ENCODE measurements at regions of chr2 and their contacts with region 1.

Region 1: GRCh38 chr2:101012706-101013181 is 10.7 kb downstream of the RPL31 start:
- DNase-seq: peak in 6 of 9 experiments; percentile 11 to 65 (median 44)
- ATAC-seq: peak; percentile 38
- H3K4me3 ChIP-seq: no peak overlapping the region
- H3K4me3 Mint-ChIP-seq: no peak overlapping the region
- H3K27ac ChIP-seq: no peak overlapping the region
- H3K27ac Mint-ChIP-seq: no peak overlapping the region
- H3K4me1 ChIP-seq: no peaks in the 10 kb centered on the region
- H3K4me1 Mint-ChIP-seq: peaks cover 15% of the 10 kb centered on the region
- H3K27me3 ChIP-seq: no peaks in the 10 kb centered on the region
- H3K27me3 Mint-ChIP-seq: no peaks in the 10 kb centered on the region
- CTCF ChIP-seq: peak; percentile 96

Region 2: GRCh38 chr2:100935372-100935752 is 77.4 kb before region 1 on chr2:
- CTCF ChIA-PET with region 1: no interaction called
- POLR2A ChIA-PET with region 1: no interaction called
- intact Hi-C with region 1: no loop called
- DNase-seq: no peak
- ATAC-seq: no peak
- H3K4me3 ChIP-seq: no peak overlapping the region
- H3K4me3 Mint-ChIP-seq: no peak overlapping the region
- H3K27ac ChIP-seq: no peak overlapping the region
- H3K27ac Mint-ChIP-seq: no peak overlapping the region
- H3K4me1 ChIP-seq: no peaks in the 10 kb centered on the region
- H3K4me1 Mint-ChIP-seq: peaks cover under 1% of the 10 kb centered on the region
- H3K27me3 ChIP-seq: no peaks in the 10 kb centered on the region
- H3K27me3 Mint-ChIP-seq: no peaks in the 10 kb centered on the region
- CTCF ChIP-seq: no peak

Region 3: GRCh38 chr2:101001691-101002561 is 10.8 kb before region 1 on chr2 and contains the start of gene RPL31:
- CTCF ChIA-PET with region 1: interaction called, 13 read pairs
- POLR2A ChIA-PET with region 1: no interaction called
- intact Hi-C with region 1: no loop called
- DNase-seq: peak; percentile 90 to 98 (median 95)
- ATAC-seq: peak; percentile 97
- H3K4me3 ChIP-seq: peak within 1 kb of the TSS; percentile 92 to 95
- H3K4me3 Mint-ChIP-seq: peak within 1 kb of the TSS; percentile 95
- H3K27ac ChIP-seq: peak within 1 kb of the TSS; percentile 81 to 90
- H3K27ac Mint-ChIP-seq: peak within 1 kb of the TSS; percentile 98
- H3K4me1 ChIP-seq: peaks cover 27% of the 10 kb centered on the region
- H3K4me1 Mint-ChIP-seq: peaks cover 51% of the 10 kb centered on the region
- H3K27me3 ChIP-seq: no peaks in the 10 kb centered on the region
- H3K27me3 Mint-ChIP-seq: no peaks in the 10 kb centered on the region
- CTCF ChIP-seq: no peak
- total RNA-seq, gene RPL31: 2,776 to 2,895 TPM

Region 4: DNA sequence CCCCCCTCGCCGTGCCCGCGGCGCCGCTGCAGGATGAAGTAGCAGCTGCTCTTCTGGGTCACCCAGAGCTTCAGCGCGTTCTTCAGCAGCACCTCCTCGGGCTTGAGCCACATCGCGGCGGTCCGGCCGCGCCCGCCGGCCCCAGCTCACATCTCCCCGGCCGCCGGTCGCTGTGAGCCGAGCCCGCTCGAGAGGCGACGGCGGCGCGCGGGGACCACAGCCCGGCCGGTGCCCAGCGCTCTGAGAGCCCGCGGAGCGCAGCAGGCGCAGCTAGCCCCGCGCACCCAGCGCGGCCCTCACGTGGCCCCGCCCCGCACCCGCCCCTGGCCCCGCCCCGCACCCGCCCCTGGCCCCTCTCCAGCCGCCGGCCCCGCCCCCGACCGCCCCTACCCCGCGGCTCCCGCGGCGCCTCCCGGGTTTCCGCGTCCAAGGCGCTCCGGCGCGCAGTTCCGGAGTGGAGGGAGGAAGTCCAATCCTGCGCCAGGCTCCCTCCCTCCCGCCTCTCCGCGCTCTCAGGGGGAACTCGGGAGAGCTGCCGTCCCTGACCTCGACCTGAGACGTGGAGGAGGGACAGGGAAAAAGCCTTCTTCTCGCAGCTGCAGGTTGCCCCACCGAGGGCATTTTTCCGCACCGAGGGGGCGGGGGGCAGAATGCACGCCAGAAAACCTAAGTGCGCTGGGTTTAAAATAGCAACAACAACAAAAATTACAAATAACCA is 138.6 kb after region 1 on chr2 and contains the start of gene TBC1D8:
- CTCF ChIA-PET with region 1: interaction called, 3 read pairs
- POLR2A ChIA-PET with region 1: interaction called, 3 read pairs
- intact Hi-C with region 1: loop called (anchors 2 to 5 kb)
- DNase-seq: peak in 8 of 9 experiments; percentile 45 to 78 (median 56)
- ATAC-seq: peak; percentile 83
- H3K4me3 ChIP-seq: peak within 1 kb of the TSS; percentile 38 to 56
- H3K4me3 Mint-ChIP-seq: peak within 1 kb of the TSS; percentile 87
- H3K27ac ChIP-seq: peak within 1 kb of the TSS in 1 of 2 experiments; percentile 40
- H3K27ac Mint-ChIP-seq: no peak within 1 kb of the TSS
- H3K4me1 ChIP-seq: peaks cover 25% of the 10 kb centered on the region
- H3K4me1 Mint-ChIP-seq: peaks cover 25% of the 10 kb centered on the region
- H3K27me3 ChIP-seq: peaks cover 0 to 6% of the 10 kb centered on the region in 2 experiments
- H3K27me3 Mint-ChIP-seq: peaks cover 8% of the 10 kb centered on the region
- CTCF ChIP-seq: no peak
- total RNA-seq, gene TBC1D8: 0.47 to 1.1 TPM

Region 5: GRCh38 chr2:101205521-101205998 is 192.8 kb after region 1 on chr2:
- CTCF ChIA-PET with region 1: interaction called, 46 read pairs
- POLR2A ChIA-PET with region 1: interaction called, 4 read pairs
- intact Hi-C with region 1: loop called (anchors 1 kb)
- DNase-seq: peak in 7 of 9 experiments; percentile 18 to 73 (median 48)
- ATAC-seq: peak; percentile 73
- H3K4me3 ChIP-seq: no peak overlapping the region
- H3K4me3 Mint-ChIP-seq: peak overlapping the region; percentile 70
- H3K27ac ChIP-seq: peak overlapping the region in 1 of 2 experiments; percentile 52
- H3K27ac Mint-ChIP-seq: peak overlapping the region; percentile 73
- H3K4me1 ChIP-seq: peaks cover 4% of the 10 kb centered on the region
- H3K4me1 Mint-ChIP-seq: peaks cover 12% of the 10 kb centered on the region
- H3K27me3 ChIP-seq: no peaks in the 10 kb centered on the region
- H3K27me3 Mint-ChIP-seq: no peaks in the 10 kb centered on the region
- CTCF ChIP-seq: peak; percentile 26

Region 6: DNA sequence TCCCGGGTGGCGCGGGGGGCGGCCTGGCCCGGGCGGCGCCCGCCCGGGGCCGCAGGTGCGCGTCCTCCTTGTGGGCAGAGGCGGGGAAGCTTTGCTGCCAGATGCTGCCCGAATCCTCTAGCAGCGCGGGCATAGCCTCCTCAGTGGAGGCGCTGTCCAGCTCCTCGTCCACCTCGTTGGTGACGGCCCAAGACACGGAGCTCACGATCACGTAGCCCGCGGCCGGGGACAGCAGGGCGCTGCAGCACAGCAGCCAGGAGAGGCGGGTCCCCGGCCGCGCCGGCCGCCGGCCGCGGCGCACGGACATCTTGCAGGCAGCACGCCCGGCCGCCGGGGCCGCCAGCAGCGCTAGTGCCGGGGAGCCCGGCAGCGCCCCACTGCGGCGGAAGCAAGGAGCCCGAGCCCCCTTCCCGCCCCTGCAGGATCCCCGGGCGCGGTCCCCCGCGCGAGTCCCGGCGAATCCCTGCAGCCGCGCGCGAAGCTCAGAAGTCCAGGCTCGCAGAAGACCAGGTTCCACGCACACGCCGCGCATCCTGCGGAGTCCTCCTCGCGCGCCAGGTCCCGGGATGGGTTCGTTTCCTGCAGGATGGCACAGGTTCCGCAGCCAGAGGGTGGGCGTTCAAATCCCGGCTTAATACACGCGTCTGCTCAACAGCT is 374.5 kb after region 1 on chr2 and contains the start of gene CREG2:
- CTCF ChIA-PET with region 1: interaction called, 3 read pairs
- POLR2A ChIA-PET with region 1: no interaction called
- intact Hi-C with region 1: loop called (anchors 2 to 10 kb)
- DNase-seq: peak; percentile 20 to 73 (median 50)
- ATAC-seq: peak; percentile 90
- H3K4me3 ChIP-seq: peak within 1 kb of the TSS; percentile 33 to 37
- H3K4me3 Mint-ChIP-seq: peak within 1 kb of the TSS; percentile 73
- H3K27ac ChIP-seq: no peak within 1 kb of the TSS
- H3K27ac Mint-ChIP-seq: no peak within 1 kb of the TSS
- H3K4me1 ChIP-seq: peaks cover 4% of the 10 kb centered on the region
- H3K4me1 Mint-ChIP-seq: peaks cover 14% of the 10 kb centered on the region
- H3K27me3 ChIP-seq: peaks cover 9 to 13% of the 10 kb centered on the region in 2 experiments
- H3K27me3 Mint-ChIP-seq: peaks cover 47% of the 10 kb centered on the region
- CTCF ChIP-seq: peak; percentile 61
- total RNA-seq, gene CREG2: not detected

Region 7: GRCh38 chr2:101831351-101831865 is 818.7 kb after region 1 on chr2:
- CTCF ChIA-PET with region 1: no interaction called
- POLR2A ChIA-PET with region 1: no interaction called
- intact Hi-C with region 1: loop called in 1 of 2 experiments (anchors 2 kb)
- DNase-seq: peak; percentile 30 to 75 (median 62)
- ATAC-seq: peak; percentile 67
- H3K4me3 ChIP-seq: no peak overlapping the region
- H3K4me3 Mint-ChIP-seq: no peak overlapping the region
- H3K27ac ChIP-seq: no peak overlapping the region
- H3K27ac Mint-ChIP-seq: peak overlapping the region; percentile 5
- H3K4me1 ChIP-seq: peaks cover 47% of the 10 kb centered on the region
- H3K4me1 Mint-ChIP-seq: peaks cover 52% of the 10 kb centered on the region
- H3K27me3 ChIP-seq: no peaks in the 10 kb centered on the region
- H3K27me3 Mint-ChIP-seq: no peaks in the 10 kb centered on the region
- CTCF ChIP-seq: peak; percentile 42

Region 8: GRCh38 chr2:102449370-102449974 is 1436.7 kb after region 1 on chr2:
- CTCF ChIA-PET with region 1: no interaction called
- POLR2A ChIA-PET with region 1: no interaction called
- intact Hi-C with region 1: loop called in 1 of 2 experiments (anchors 5 kb)
- DNase-seq: peak; percentile 36 to 74 (median 61)
- ATAC-seq: no peak
- H3K4me3 ChIP-seq: no peak overlapping the region
- H3K4me3 Mint-ChIP-seq: no peak overlapping the region
- H3K27ac ChIP-seq: no peak overlapping the region
- H3K27ac Mint-ChIP-seq: no peak overlapping the region
- H3K4me1 ChIP-seq: no peaks in the 10 kb centered on the region
- H3K4me1 Mint-ChIP-seq: peaks cover 3% of the 10 kb centered on the region
- H3K27me3 ChIP-seq: no peaks in the 10 kb centered on the region
- H3K27me3 Mint-ChIP-seq: no peaks in the 10 kb centered on the region
- CTCF ChIP-seq: peak; percentile 71